ENCODE measurements at regions of chr20 and their contacts with region 1.

Region 1: DNA sequence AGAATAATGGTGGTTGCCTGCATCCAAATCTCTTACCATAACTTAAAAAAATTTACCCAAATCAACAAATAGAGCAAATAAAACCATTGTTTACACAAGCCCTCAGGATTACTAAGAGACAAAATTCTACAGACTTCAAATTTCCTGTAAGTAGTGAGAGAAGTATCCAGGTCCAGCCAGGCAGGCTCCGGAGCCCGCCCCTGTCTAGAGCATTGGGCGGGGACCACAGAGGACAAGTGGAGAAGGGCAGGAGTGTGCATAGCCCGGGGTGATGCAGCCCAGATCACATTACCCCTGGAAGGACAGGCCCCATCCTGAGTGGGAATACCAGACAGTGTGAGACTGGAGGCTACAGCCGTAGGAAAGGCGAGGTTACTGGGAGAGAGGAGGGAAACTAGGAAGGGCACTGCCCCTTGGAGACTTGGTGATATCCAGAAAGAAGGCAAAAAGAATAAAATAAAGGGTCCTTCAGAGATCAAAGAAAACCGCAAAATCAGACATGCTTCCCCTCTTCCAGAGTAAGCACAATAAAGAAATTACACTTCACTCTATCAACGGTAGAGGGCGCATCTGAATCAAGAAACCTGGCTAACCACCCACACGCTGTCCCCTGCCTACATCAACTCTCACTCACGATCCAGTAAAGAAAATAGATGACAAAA is 26.6 kb downstream of the RIN2 start:
- DNase-seq: peak; percentile 88
- H3K4me3 ChIP-seq: peak overlapping the region; percentile 13
- H3K27ac ChIP-seq: peak overlapping the region; percentile 87
- H3K4me1 ChIP-seq: peaks cover 43% of the 10 kb centered on the region
- H3K27me3 ChIP-seq: no peaks in the 10 kb centered on the region

Region 2: DNA sequence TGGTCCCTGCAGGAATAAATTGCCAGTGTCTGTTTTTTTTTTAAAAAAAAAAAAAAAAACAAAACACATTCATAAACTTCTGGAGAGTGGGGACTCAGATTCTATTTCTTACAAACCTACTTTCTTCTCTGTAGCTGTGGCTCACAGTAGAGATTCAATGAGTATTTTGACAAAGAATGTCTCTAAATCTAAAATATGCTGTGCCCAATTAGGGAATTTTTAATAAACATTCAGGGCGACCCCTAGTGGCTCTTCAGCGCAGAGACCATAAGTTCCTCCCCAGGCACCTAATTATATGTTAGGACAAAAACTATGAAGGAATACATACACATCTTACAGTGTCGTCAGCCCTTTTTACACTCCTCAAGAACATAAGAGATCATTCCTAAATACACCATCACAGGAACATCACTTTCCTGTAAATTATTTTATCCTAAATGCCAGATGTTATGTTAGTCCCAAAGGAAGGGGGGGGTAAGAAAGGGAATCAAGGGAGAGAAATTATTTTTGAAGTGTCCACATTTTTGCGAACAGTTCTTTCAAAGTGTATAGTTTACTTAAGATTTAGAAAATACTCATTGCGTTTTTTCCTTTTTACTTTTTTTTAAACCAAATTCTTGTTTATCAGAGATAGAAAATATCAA is 210.7 kb after region 1 on chr20:
- in situ Hi-C with region 1: loop called (anchors 25 kb)
- DNase-seq: peak; percentile 78
- H3K4me3 ChIP-seq: no peak overlapping the region
- H3K27ac ChIP-seq: peak overlapping the region; percentile 87
- H3K4me1 ChIP-seq: peaks cover 51% of the 10 kb centered on the region
- H3K27me3 ChIP-seq: no peaks in the 10 kb centered on the region